T-cell (primary cell): ENCODE measurements at regions of chr2 and their contacts with region 1.

Region 1: GRCh38 chr2:43326101-43326825 is 99.9 kb upstream of the ZFP36L2 start:
- DNase-seq: no peak
- ATAC-seq: no peak
- H3K4me3 ChIP-seq: no peak overlapping the region
- H3K4me3 Mint-ChIP-seq: no peak overlapping the region
- H3K27ac ChIP-seq: no peak overlapping the region
- H3K27ac Mint-ChIP-seq: no peak overlapping the region
- H3K4me1 ChIP-seq: no peaks in the 10 kb centered on the region
- H3K4me1 Mint-ChIP-seq: no peaks in the 10 kb centered on the region
- H3K27me3 ChIP-seq: no peaks in the 10 kb centered on the region
- H3K27me3 Mint-ChIP-seq: no peaks in the 10 kb centered on the region

Region 2: GRCh38 chr2:43376523-43377198 is 50.4 kb after region 1 on chr2:
- CTCF ChIA-PET with region 1: no interaction called
- POLR2A ChIA-PET with region 1: interaction called in 1 of 2 experiments, 23 read pairs
- DNase-seq: no peak
- ATAC-seq: no peak
- H3K4me3 ChIP-seq: no peak overlapping the region
- H3K4me3 Mint-ChIP-seq: no peak overlapping the region
- H3K27ac ChIP-seq: no peak overlapping the region
- H3K27ac Mint-ChIP-seq: no peak overlapping the region
- H3K4me1 ChIP-seq: no peaks in the 10 kb centered on the region
- H3K4me1 Mint-ChIP-seq: peaks cover 0 to 25% (median 2%) of the 10 kb centered on the region in 3 donors
- H3K27me3 ChIP-seq: no peaks in the 10 kb centered on the region
- H3K27me3 Mint-ChIP-seq: no peaks in the 10 kb centered on the region